Common myeloid progenitor, CD34-positive (primary cell): ENCODE measurements at regions of chr3 and their contacts with region 1.

Region 1: DNA sequence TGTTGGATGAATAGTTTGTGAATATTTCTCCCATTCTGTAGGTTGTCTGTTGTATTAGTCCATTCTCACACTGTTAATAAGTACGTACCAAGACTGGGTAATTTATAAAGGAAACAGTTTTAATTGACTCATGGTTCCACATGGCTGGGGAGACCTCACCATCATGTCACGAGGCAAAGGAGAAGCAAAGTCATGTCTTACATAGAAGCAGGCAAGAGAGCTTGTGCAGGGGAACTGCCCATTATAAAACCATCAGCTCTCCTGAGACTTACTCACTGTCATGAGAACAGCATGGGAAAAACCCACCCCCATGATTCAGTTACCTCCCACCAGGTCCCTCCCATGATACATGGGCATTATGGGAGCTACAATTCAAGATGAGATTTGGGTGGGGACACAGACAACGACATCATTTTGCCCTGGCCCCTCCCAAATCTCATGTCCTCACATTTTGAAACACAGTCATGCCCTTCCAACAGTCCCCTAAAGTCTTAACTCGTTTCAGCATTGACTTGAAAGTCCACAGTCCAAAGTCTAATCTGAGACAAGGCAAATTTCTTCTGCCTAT is 133.2 kb downstream of the LMLN start:
- DNase-seq: peak in 1 of 3 donors; percentile 13
- H3K4me3 ChIP-seq: no peak overlapping the region
- H3K27ac ChIP-seq: no peak overlapping the region
- H3K4me1 ChIP-seq: no peaks in the 10 kb centered on the region
- H3K27me3 ChIP-seq: peaks cover 2 to 21% (median 10%) of the 10 kb centered on the region in 5 experiments

Region 2: DNA sequence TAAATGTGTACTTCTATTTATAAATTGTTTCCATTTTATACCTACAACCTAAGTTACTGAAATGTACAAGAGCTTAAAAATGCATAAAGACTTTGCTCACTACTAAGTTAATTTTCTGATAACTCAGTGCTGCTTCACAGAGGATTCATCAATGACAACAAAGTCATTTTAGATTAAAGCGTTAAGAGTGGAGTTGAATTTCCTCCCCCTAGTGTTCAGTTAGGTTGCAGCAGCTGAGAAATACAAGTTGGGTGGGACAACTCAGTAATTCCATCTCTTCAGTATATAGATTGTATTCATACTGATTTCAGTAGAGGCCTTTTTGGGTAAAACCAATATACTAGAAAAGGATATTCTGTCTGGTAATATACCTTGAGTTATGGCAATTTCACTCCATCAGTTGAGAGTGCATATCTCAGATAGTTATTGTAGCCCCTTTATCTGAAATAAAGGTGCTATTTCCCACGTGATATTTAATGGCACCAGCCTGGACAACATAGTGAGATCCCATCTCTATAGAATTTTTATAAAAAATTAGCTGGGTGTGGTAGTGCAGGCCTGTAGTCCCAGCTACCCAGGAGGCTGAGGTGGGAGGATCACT is 150.1 kb before region 1 on chr3:
- CTCF ChIA-PET with region 1: no interaction called
- POLR2A ChIA-PET with region 1: no interaction called
- DNase-seq: peak; percentile 54 to 78 (median 71)
- H3K4me3 ChIP-seq: no peak overlapping the region
- H3K27ac ChIP-seq: no peak overlapping the region
- H3K4me1 ChIP-seq: no peaks in the 10 kb centered on the region
- H3K27me3 ChIP-seq: no peaks in the 10 kb centered on the region

Region 3: DNA sequence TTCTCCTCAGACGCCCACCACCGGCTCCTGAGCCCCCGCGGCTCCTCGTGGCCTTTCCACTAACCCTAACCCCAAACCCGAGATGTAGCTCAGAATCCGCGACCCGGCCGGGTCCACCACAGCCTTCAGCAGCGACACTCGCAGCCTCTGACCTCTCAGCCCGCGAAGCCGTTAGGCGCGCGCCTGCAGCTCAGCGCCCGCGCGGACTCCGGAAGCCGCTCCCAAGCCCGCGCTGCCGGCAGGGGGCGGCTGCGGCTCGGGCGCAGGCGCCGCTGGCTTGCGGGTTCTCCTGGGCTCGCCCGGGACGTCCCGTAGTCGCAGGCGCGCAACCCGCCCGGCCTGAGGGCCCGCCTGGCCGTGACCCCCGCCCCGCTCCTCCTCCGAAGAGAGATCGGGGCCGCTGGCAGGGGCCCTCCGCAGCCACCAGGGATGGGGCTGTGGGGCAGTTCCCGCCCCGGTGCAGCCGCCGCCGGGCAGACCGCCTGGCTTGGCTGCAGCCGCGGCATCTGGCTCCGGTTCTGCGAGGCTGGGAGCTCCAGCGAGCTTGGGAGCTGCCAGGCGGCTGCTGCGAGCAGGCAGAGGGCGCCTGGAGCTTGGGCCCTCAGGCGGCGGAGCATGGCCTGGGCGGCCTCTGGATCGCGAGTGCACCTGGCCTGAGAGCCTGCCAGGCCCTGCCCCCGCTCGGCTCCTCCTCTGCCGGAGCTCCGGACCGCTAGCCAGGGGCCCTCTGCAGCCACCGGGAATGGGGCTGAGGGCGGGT is 12.5 kb before region 1 on chr3:
- CTCF ChIA-PET with region 1: interaction called, 25 read pairs
- POLR2A ChIA-PET with region 1: no interaction called
- DNase-seq: peak; percentile 79 to 86 (median 81)
- H3K4me3 ChIP-seq: peak overlapping the region; percentile 48 to 78 (median 65)
- H3K27ac ChIP-seq: peak overlapping the region in 1 of 2 experiments; percentile 43
- H3K4me1 ChIP-seq: peaks cover 0 to 18% (median 16%) of the 10 kb centered on the region in 4 experiments
- H3K27me3 ChIP-seq: peaks cover 3 to 56% (median 21%) of the 10 kb centered on the region in 5 experiments